Activated CD4-positive, alpha-beta T cell treated with anti-CD3 and anti-CD28 coated beads, Interleukin-2, amount 10 ng/mL, durations not matched to agents 24 days and 14 days (primary cell): ENCODE measurements at regions of chr13 and their contacts with region 1.

Region 1: GRCh38 chr13:50075619-50076097 is 60.4 kb downstream of the KCNRG start:
- DNase-seq: no peak
- H3K4me3 Mint-ChIP-seq: peak overlapping the region; percentile 60
- H3K27ac Mint-ChIP-seq: no peak overlapping the region
- H3K4me1 Mint-ChIP-seq: peaks cover 40% of the 10 kb centered on the region
- H3K27me3 Mint-ChIP-seq: no peaks in the 10 kb centered on the region

Region 2: DNA sequence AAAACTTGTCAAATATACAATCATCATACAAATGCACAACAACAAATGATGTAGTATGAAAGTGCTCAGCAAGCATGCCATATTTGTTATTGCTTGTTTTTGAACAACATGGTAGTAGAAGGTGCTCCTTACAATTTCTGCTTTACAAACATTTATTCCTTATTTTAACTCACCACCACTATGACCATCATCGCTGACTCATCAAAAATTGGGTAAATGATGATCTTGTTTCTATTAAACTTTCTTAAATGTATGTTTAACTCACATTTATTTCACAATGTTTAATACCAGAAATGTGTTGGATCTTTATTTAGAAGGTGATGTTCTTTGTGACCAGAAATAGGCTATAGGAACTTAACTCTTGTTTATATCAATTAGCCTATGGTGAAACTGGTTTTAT is 14.9 kb before region 1 on chr13:
- intact Hi-C with region 1: loop called (anchors 2 kb)
- DNase-seq: no peak
- H3K4me3 Mint-ChIP-seq: no peak overlapping the region
- H3K27ac Mint-ChIP-seq: no peak overlapping the region
- H3K4me1 Mint-ChIP-seq: peaks cover 22% of the 10 kb centered on the region
- H3K27me3 Mint-ChIP-seq: no peaks in the 10 kb centered on the region